ENCODE measurements at regions of chr2 and their contacts with region 1.

Region 1: DNA sequence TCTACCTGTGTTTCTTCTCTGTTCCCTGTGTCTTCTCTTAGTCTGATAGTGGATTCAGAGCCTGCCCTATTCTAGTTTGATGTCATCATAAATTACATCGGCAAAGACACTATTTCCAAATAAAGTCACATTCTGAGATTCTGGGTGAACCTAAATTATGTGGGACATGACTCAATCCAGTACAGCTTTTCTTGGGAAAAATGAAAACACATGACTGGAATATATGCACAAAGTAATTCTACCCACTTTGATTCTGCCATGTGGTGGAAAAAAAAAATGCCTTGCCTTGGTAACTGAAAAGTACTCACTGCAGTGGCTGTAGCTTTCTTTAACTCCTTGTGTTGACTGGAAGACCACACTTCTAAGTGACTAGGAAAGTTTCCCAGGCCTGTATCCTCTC is 73.7 kb downstream of the LRATD1 start:
- DNase-seq: no peak
- H3K4me3 ChIP-seq: no peak overlapping the region
- H3K27ac ChIP-seq: no peak overlapping the region
- H3K4me1 ChIP-seq: no peaks in the 10 kb centered on the region
- H3K27me3 ChIP-seq: no peaks in the 10 kb centered on the region
- CTCF ChIP-seq: no peak
- POLR2A ChIP-seq: no peak

Region 2: DNA sequence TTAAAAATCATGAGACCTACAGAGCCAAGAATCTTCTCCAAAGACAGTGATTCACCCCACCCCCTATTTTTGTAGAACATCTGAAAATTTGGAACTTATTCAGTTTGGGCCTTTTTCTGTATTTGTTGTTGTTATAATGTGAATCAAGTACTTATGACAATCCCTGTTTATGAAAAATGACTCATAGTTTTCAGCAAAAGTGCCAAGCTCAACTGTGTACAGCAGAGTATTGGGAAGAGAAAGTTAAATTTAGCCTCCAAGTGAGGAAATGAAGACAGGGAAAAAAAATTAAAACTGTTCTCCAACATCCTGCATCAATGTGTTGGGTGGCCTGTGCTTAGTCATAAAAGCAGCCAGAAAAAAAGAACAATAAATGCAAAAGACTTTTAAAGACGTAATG is 27.4 kb before region 1 on chr2:
- intact Hi-C with region 1: loop called (anchors 2 kb)
- DNase-seq: no peak
- H3K4me3 ChIP-seq: no peak overlapping the region
- H3K27ac ChIP-seq: no peak overlapping the region
- H3K4me1 ChIP-seq: no peaks in the 10 kb centered on the region
- H3K27me3 ChIP-seq: no peaks in the 10 kb centered on the region
- CTCF ChIP-seq: no peak
- POLR2A ChIP-seq: no peak

Region 3: DNA sequence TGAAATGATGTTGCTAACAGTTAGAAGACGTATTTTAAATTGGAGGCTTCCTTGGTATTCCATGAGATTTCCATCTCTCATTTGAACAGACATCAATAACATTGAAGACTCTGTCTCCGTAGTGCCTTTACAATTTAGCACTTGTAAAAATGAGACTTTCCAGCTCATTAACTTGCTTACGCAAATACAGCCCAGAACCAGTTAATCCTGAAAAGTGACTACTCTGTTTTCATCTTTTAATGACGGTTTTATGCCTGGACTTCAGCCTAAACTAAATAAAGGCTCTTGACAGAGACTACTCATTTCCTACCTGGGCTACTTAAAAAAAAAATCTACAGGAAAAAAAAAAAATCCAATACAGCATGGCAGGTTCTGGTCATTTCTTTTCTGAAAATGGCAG is 74.9 kb after region 1 on chr2:
- intact Hi-C with region 1: no loop called
- DNase-seq: no peak
- H3K4me3 ChIP-seq: no peak overlapping the region
- H3K27ac ChIP-seq: no peak overlapping the region
- H3K4me1 ChIP-seq: no peaks in the 10 kb centered on the region
- H3K27me3 ChIP-seq: no peaks in the 10 kb centered on the region
- CTCF ChIP-seq: no peak
- POLR2A ChIP-seq: no peak

Measured in breast epithelium (tissue), 4 donors.